ENCODE measurements at regions of chr6 and their contacts with region 1.

Region 1: GRCh38 chr6:159104163-159104925 is 59.6 kb upstream of the TAGAP start:
- DNase-seq: peak; percentile 88
- ATAC-seq: peak; percentile 44
- H3K4me3 ChIP-seq: peak overlapping the region in 3 of 5 experiments; percentile 2 to 45 (median 3)
- H3K4me3 Mint-ChIP-seq: peak overlapping the region; percentile 73
- H3K27ac ChIP-seq: peak overlapping the region; percentile 94 to 99
- H3K27ac Mint-ChIP-seq: peak overlapping the region; percentile 98
- H3K4me1 ChIP-seq: peaks cover 76 to 87% of the 10 kb centered on the region in 2 donors
- H3K4me1 Mint-ChIP-seq: peaks cover 90% of the 10 kb centered on the region
- H3K27me3 ChIP-seq: no peaks in the 10 kb centered on the region
- H3K27me3 Mint-ChIP-seq: no peaks in the 10 kb centered on the region
- CTCF ChIP-seq: peak; percentile 93

Region 2: DNA sequence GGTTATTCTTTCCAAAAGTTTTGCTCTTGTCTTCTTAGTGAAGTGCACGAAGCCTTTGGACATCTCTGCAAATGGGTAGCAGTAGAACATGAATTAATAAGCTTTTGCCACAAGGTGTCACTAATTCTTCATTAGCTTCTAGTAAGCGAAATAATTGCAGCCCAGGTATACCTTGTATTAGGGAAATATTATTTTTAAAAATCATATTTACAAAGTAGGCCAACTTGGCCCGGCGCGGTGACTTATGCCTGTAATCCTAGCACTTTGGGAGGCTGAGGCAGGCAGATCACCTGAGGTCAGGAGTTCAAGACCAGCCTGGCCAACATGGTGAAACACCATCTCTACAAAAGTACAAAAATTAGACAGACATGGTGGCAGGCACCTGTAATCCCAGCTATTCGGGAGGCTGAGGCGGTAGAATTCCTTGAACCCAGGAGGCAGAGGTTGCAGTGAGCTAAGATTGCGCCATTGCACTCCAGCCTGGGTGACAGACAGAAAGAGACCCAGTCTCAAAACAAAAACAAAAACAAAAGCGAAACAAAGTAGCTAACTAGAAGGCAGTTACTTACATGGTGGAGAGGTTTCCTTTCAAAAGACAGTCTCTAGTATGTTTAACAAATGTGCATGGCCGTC is 95.6 kb before region 1 on chr6:
- CTCF ChIA-PET with region 1: interaction called, 478 read pairs
- POLR2A ChIA-PET with region 1: interaction called, 15 read pairs
- intact Hi-C with region 1: loop called (anchors 1 kb)
- DNase-seq: peak; percentile 78
- ATAC-seq: peak; percentile 82
- H3K4me3 ChIP-seq: peak overlapping the region in 2 of 5 experiments; percentile 26 to 48
- H3K4me3 Mint-ChIP-seq: peak overlapping the region; percentile 38
- H3K27ac ChIP-seq: no peak overlapping the region
- H3K27ac Mint-ChIP-seq: peak overlapping the region; percentile 32
- H3K4me1 ChIP-seq: peaks cover 17 to 25% of the 10 kb centered on the region in 2 donors
- H3K4me1 Mint-ChIP-seq: peaks cover 39% of the 10 kb centered on the region
- H3K27me3 ChIP-seq: no peaks in the 10 kb centered on the region
- H3K27me3 Mint-ChIP-seq: no peaks in the 10 kb centered on the region
- CTCF ChIP-seq: peak; percentile 79

Region 3: GRCh38 chr6:159056003-159056402 is 48.3 kb before region 1 on chr6:
- CTCF ChIA-PET with region 1: interaction called, 64 read pairs
- POLR2A ChIA-PET with region 1: interaction called, 12 read pairs
- intact Hi-C with region 1: no loop called
- DNase-seq: peak; percentile 80
- ATAC-seq: peak; percentile 73
- H3K4me3 ChIP-seq: peak overlapping the region; percentile 15 to 55 (median 33)
- H3K4me3 Mint-ChIP-seq: peak overlapping the region; percentile 74
- H3K27ac ChIP-seq: peak overlapping the region; percentile 80 to 86
- H3K27ac Mint-ChIP-seq: peak overlapping the region; percentile 89
- H3K4me1 ChIP-seq: peaks cover 63 to 68% of the 10 kb centered on the region in 2 donors
- H3K4me1 Mint-ChIP-seq: peaks cover 74% of the 10 kb centered on the region
- H3K27me3 ChIP-seq: no peaks in the 10 kb centered on the region
- H3K27me3 Mint-ChIP-seq: no peaks in the 10 kb centered on the region
- CTCF ChIP-seq: no peak

Region 4: GRCh38 chr6:159084493-159085091 is 19.8 kb before region 1 on chr6:
- CTCF ChIA-PET with region 1: interaction called, 14 read pairs
- POLR2A ChIA-PET with region 1: interaction called, 3 read pairs
- intact Hi-C with region 1: no loop called
- DNase-seq: no peak
- ATAC-seq: no peak
- H3K4me3 ChIP-seq: no peak overlapping the region
- H3K4me3 Mint-ChIP-seq: no peak overlapping the region
- H3K27ac ChIP-seq: no peak overlapping the region
- H3K27ac Mint-ChIP-seq: no peak overlapping the region
- H3K4me1 ChIP-seq: peaks cover 32 to 33% of the 10 kb centered on the region in 2 donors
- H3K4me1 Mint-ChIP-seq: peaks cover 27% of the 10 kb centered on the region
- H3K27me3 ChIP-seq: no peaks in the 10 kb centered on the region
- H3K27me3 Mint-ChIP-seq: no peaks in the 10 kb centered on the region
- CTCF ChIP-seq: no peak

Region 5: DNA sequence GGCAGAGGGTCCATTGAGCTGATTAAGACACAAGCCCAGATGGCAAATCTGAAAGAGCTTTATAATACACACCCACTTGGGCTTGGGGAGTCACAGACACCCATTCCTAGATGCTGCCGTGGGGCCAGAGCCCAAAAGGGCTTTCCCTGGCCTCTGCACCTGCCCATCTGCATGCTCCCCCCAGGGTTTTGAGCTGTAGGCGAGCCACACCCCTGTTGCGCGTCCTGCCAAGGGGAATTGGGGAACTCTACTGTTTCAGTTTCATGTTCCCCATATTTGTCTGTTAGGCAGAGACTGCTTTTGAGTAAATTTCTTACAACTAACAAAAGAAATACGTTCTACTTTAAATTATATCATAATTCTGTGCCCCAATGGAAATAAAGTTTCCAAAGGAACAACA is 12.0 kb after region 1 on chr6:
- CTCF ChIA-PET with region 1: interaction called, 1,002 read pairs
- POLR2A ChIA-PET with region 1: interaction called, 60 read pairs
- intact Hi-C with region 1: loop called (anchors 1 kb)
- DNase-seq: peak; percentile 93
- ATAC-seq: peak; percentile 84
- H3K4me3 ChIP-seq: peak overlapping the region in 2 of 5 experiments; percentile 0 to 48
- H3K4me3 Mint-ChIP-seq: peak overlapping the region; percentile 88
- H3K27ac ChIP-seq: peak overlapping the region; percentile 99
- H3K27ac Mint-ChIP-seq: peak overlapping the region; percentile 95
- H3K4me1 ChIP-seq: peaks cover 86 to 87% of the 10 kb centered on the region in 2 donors
- H3K4me1 Mint-ChIP-seq: peaks cover 87% of the 10 kb centered on the region
- H3K27me3 ChIP-seq: no peaks in the 10 kb centered on the region
- H3K27me3 Mint-ChIP-seq: no peaks in the 10 kb centered on the region
- CTCF ChIP-seq: no peak

Region 6: DNA sequence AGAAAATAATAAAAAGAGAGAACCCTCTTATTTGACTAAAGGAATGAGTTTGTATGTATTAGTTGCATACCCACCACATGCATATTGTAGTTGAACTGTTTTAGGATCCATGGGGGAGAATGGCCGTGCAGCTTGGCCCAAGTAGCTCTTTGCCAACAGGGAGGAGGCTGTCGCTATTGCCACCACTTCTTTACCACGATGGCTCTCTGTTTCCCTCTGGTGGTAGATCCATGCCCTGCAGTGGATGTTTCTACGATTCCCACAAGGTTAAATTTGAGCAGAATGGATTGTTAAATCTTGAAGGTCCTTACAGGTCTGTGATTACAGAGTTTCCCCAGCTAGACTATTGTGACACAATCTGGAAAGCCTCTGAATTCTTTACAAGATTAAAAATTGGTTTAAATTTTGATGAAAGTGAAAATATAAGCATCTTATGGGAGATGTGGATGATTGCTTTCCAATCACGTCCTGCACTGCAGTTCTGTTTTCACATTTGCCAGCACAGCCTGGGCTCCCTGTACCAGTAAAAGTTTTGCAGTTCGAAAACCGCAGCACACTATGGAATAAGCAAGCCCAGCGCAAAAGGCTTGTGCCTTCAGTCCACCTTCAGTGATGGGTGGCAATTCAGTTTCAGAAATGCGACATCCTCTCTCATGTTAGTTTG is 30.5 kb after region 1 on chr6:
- CTCF ChIA-PET with region 1: interaction called, 1,002 read pairs
- POLR2A ChIA-PET with region 1: interaction called, 17 read pairs
- intact Hi-C with region 1: loop called (anchors 1 kb)
- DNase-seq: peak; percentile 89
- ATAC-seq: peak; percentile 97
- H3K4me3 ChIP-seq: peak overlapping the region in 3 of 5 experiments; percentile 27 to 45 (median 28)
- H3K4me3 Mint-ChIP-seq: peak overlapping the region; percentile 66
- H3K27ac ChIP-seq: peak overlapping the region; percentile 39 to 42
- H3K27ac Mint-ChIP-seq: peak overlapping the region; percentile 76
- H3K4me1 ChIP-seq: peaks cover 12 to 16% of the 10 kb centered on the region in 2 donors
- H3K4me1 Mint-ChIP-seq: peaks cover 22% of the 10 kb centered on the region
- H3K27me3 ChIP-seq: no peaks in the 10 kb centered on the region
- H3K27me3 Mint-ChIP-seq: no peaks in the 10 kb centered on the region
- CTCF ChIP-seq: peak; percentile 98